ENCODE measurements at regions of chr11 and their contacts with region 1.

Region 1: GRCh38 chr11:2444821-2445745 is at the start of gene KCNQ1:
- DNase-seq: peak; percentile 40
- H3K4me3 Mint-ChIP-seq: peak within 1 kb of the TSS; percentile 89
- H3K27ac Mint-ChIP-seq: no peak within 1 kb of the TSS
- H3K4me1 Mint-ChIP-seq: peaks cover 26% of the 10 kb centered on the region
- H3K27me3 Mint-ChIP-seq: no peaks in the 10 kb centered on the region
- total RNA-seq, gene KCNQ1: 10.6 to 10.8 TPM

Region 2: DNA sequence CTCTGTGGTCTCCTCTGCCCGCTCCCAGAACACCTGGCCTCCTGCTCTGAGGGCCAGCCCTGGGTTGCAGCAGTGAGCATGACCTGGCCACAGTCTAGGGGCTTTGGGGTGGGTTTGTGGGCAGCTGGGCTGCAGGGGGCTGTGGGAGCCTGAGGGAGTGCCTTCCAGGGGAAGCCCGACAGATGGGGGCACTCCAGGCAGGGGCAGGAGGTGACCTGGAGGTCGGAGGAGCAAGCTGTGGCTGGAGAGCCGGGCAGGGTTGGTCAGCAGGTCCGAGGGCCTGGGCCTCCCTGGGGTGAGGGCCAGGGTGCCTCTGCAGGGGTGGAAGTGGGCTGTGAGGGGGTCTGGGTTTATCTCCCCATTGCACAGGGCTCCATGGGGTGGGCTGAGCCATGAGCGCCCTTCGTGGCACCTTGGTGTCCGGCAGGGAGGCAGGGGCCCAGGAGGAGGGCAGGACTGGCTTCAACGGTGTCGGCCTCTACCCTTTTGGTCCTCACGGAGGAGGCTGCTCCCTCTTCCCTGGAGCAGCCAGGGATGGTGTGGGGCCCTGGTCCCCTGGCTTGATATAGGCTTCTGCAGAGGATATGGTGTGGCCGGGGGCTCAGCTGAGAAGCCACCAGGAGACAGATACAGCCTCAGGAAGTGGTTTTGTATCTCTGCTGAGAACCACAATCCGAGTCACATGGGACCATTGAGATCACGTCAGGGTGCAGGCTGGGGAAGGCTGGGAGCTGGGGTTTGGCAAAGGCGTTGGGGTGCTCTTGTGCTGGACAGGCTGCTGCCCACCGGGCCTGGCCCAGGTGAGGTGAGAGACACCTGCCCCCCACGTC is 22.0 kb after region 1 on chr11:
- CTCF ChIA-PET with region 1: interaction called, 3 read pairs
- intact Hi-C with region 1: loop called (anchors 1 kb)
- DNase-seq: peak; percentile 77
- H3K4me3 Mint-ChIP-seq: peak overlapping the region; percentile 12
- H3K27ac Mint-ChIP-seq: no peak overlapping the region
- H3K4me1 Mint-ChIP-seq: peaks cover 66% of the 10 kb centered on the region
- H3K27me3 Mint-ChIP-seq: no peaks in the 10 kb centered on the region

Region 3: GRCh38 chr11:2480874-2481220 is 35.8 kb after region 1 on chr11:
- CTCF ChIA-PET with region 1: interaction called, 3 read pairs
- intact Hi-C with region 1: loop called (anchors 2 kb)
- DNase-seq: peak; percentile 38
- H3K4me3 Mint-ChIP-seq: peak overlapping the region; percentile 60
- H3K27ac Mint-ChIP-seq: peak overlapping the region; percentile 86
- H3K4me1 Mint-ChIP-seq: peaks cover 36% of the 10 kb centered on the region
- H3K27me3 Mint-ChIP-seq: no peaks in the 10 kb centered on the region

Region 4: DNA sequence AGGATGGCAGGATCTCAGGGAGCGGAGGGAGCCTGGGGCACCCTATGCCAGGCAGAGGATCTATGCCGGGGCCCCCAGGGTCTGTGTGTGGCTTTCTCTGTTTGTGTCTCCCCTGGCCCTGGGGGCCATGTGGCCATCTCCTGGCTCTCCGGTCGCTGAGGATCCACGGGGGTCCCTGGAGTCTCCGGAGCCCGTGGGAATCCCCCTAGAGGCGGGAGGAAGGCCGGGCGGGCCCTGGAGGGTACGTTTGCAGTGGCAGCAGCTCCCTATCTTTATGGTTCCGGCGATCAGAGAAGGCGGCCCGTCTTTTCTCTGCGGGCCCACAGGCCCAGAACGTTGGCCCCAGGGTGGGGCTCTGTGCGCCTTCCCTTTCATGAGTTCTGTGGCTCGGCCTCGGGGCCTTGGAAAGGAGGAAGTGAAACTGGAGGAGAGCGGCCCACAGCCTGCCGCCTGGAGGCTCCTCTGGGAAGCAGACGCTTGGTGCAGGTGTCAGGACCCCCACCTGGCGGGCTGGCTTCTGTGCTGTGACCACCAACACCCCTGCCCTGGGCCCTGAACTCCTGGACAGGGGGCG is 81.8 kb after region 1 on chr11:
- CTCF ChIA-PET with region 1: interaction called, 16 read pairs
- intact Hi-C with region 1: loop called (anchors 5 kb)
- DNase-seq: peak; percentile 33
- H3K4me3 Mint-ChIP-seq: peak overlapping the region; percentile 18
- H3K27ac Mint-ChIP-seq: peak overlapping the region; percentile 59
- H3K4me1 Mint-ChIP-seq: peaks cover 24% of the 10 kb centered on the region
- H3K27me3 Mint-ChIP-seq: no peaks in the 10 kb centered on the region

Region 5: GRCh38 chr11:2699531-2700414 is 254.7 kb after region 1 on chr11 and contains the start of gene KCNQ1OT1:
- CTCF ChIA-PET with region 1: no interaction called
- intact Hi-C with region 1: loop called (anchors 10 kb)
- DNase-seq: peak; percentile 90
- H3K4me3 Mint-ChIP-seq: peak within 1 kb of the TSS; percentile 83
- H3K27ac Mint-ChIP-seq: no peak within 1 kb of the TSS
- H3K4me1 Mint-ChIP-seq: peaks cover 8% of the 10 kb centered on the region
- H3K27me3 Mint-ChIP-seq: no peaks in the 10 kb centered on the region
- total RNA-seq, gene KCNQ1OT1: 0.17 to 0.20 TPM

Region 6: GRCh38 chr11:2892215-2893020 is 447.3 kb after region 1 on chr11:
- CTCF ChIA-PET with region 1: no interaction called
- intact Hi-C with region 1: loop called (anchors 2 kb)
- DNase-seq: peak; percentile 79
- H3K4me3 Mint-ChIP-seq: peak overlapping the region; percentile 84
- H3K27ac Mint-ChIP-seq: peak overlapping the region; percentile 80
- H3K4me1 Mint-ChIP-seq: peaks cover 16% of the 10 kb centered on the region
- H3K27me3 Mint-ChIP-seq: no peaks in the 10 kb centered on the region